Natural killer cell (primary cell): ENCODE measurements at regions of chr13 and their contacts with region 1.

Region 1: GRCh38 chr13:40982772-40983171 is 36.3 kb downstream of the ELF1 start:
- DNase-seq: peak in 1 of 2 donors; percentile 89
- ATAC-seq: peak; percentile 57 to 80 (median 78)
- H3K4me3 ChIP-seq: peak overlapping the region; percentile 48
- H3K4me3 Mint-ChIP-seq: peak overlapping the region; percentile 99
- H3K27ac ChIP-seq: peak overlapping the region; percentile 99
- H3K27ac Mint-ChIP-seq: peak overlapping the region; percentile 87 to 93
- H3K4me1 ChIP-seq: peaks cover 27% of the 10 kb centered on the region
- H3K4me1 Mint-ChIP-seq: peaks cover 80 to 83% of the 10 kb centered on the region in 2 donors
- H3K27me3 ChIP-seq: no peaks in the 10 kb centered on the region
- H3K27me3 Mint-ChIP-seq: no peaks in the 10 kb centered on the region
- CTCF ChIP-seq: no peak

Region 2: GRCh38 chr13:40922437-40923040 is 60.2 kb before region 1 on chr13:
- intact Hi-C with region 1: loop called (anchors 5 kb)
- DNase-seq: peak in 1 of 2 donors; percentile 17
- ATAC-seq: no peak
- H3K4me3 ChIP-seq: no peak overlapping the region
- H3K4me3 Mint-ChIP-seq: peak overlapping the region; percentile 97
- H3K27ac ChIP-seq: no peak overlapping the region
- H3K27ac Mint-ChIP-seq: peak overlapping the region; percentile 90
- H3K4me1 ChIP-seq: peaks cover 12% of the 10 kb centered on the region
- H3K4me1 Mint-ChIP-seq: peaks cover 19 to 20% of the 10 kb centered on the region in 2 donors
- H3K27me3 ChIP-seq: no peaks in the 10 kb centered on the region
- H3K27me3 Mint-ChIP-seq: no peaks in the 10 kb centered on the region
- CTCF ChIP-seq: no peak

Region 3: GRCh38 chr13:40943073-40943472 is 39.7 kb before region 1 on chr13:
- intact Hi-C with region 1: no loop called
- DNase-seq: no peak
- ATAC-seq: no peak
- H3K4me3 ChIP-seq: no peak overlapping the region
- H3K4me3 Mint-ChIP-seq: no peak overlapping the region
- H3K27ac ChIP-seq: no peak overlapping the region
- H3K27ac Mint-ChIP-seq: peak overlapping the region; percentile 21 to 77
- H3K4me1 ChIP-seq: no peaks in the 10 kb centered on the region
- H3K4me1 Mint-ChIP-seq: peaks cover 43 to 50% of the 10 kb centered on the region in 2 donors
- H3K27me3 ChIP-seq: no peaks in the 10 kb centered on the region
- H3K27me3 Mint-ChIP-seq: no peaks in the 10 kb centered on the region
- CTCF ChIP-seq: no peak

Region 4: DNA sequence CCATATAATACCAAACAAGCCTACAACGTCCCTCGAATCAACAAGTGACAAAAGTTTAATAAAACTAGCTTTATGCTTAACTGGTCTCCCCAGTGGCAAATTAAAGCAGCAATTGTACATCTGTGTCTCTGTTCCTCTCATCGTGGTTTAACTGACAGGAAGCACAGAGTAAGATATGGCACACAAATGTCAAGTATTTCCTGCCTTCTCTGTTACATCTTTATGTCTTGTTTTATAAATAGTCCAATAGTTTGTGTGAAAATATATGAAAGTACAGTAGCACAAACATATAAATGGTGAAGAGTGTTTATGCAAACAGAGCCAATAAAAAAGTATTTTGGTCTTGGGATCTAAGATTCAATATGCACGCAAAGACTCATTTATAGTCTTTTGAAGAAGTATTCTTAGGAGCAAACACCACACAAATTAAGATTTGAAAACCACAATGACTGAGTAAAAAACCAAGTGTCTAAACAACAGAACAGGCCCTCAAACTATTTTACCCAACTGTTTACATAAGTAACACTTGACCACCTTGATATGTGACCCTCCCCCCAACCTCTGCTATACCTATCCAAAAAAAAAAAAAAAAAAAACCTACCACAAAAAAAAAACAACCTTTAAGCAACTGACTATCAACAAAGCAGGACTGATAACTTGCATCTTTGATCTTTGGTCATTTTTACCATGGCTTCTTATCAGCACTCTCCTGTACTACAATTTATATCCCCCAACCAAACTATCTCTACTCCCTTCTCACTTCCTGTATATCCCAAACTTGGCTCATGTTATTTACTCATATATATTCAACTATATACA is 22.3 kb after region 1 on chr13:
- intact Hi-C with region 1: loop called (anchors 2 kb)
- DNase-seq: peak in 1 of 2 donors; percentile 78
- ATAC-seq: peak; percentile 75 to 88 (median 87)
- H3K4me3 ChIP-seq: peak overlapping the region; percentile 15
- H3K4me3 Mint-ChIP-seq: peak overlapping the region; percentile 73
- H3K27ac ChIP-seq: peak overlapping the region; percentile 73
- H3K27ac Mint-ChIP-seq: peak overlapping the region; percentile 88 to 93
- H3K4me1 ChIP-seq: peaks cover 23% of the 10 kb centered on the region
- H3K4me1 Mint-ChIP-seq: peaks cover 56 to 65% of the 10 kb centered on the region in 2 donors
- H3K27me3 ChIP-seq: no peaks in the 10 kb centered on the region
- H3K27me3 Mint-ChIP-seq: no peaks in the 10 kb centered on the region
- CTCF ChIP-seq: no peak

Region 5: DNA sequence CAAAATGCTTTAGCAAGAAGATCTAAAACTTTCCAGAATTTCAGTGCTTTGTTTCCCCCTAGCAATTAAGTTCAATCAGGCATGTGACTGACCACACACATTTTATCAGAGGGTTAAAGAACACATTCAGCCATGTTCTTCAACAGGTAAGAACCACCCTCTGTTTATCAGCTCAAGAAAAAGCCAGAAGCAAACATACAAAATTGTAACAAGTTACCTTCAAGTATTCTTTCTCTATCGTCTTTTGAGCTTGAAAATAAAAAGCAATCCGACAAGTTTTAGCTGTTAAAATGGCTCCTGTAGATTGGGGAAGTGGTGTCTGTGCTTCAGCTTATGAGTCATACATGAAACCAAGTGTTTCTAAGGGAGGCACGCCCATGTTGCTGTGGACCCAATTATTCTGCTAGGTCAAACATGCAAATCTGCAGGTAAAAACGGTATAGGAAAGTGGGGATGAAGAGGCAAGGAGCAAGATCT is 36.3 kb after region 1 on chr13 and contains the start of gene ELF1:
- intact Hi-C with region 1: loop called (anchors 1 kb)
- DNase-seq: peak; percentile 32 to 87
- ATAC-seq: peak; percentile 87 to 93 (median 91)
- H3K4me3 ChIP-seq: peak within 1 kb of the TSS; percentile 94
- H3K4me3 Mint-ChIP-seq: peak within 1 kb of the TSS; percentile 99
- H3K27ac ChIP-seq: peak within 1 kb of the TSS; percentile 100
- H3K27ac Mint-ChIP-seq: peak within 1 kb of the TSS; percentile 91 to 98
- H3K4me1 ChIP-seq: peaks cover 6% of the 10 kb centered on the region
- H3K4me1 Mint-ChIP-seq: peaks cover 45 to 52% of the 10 kb centered on the region in 2 donors
- H3K27me3 ChIP-seq: no peaks in the 10 kb centered on the region
- H3K27me3 Mint-ChIP-seq: no peaks in the 10 kb centered on the region
- CTCF ChIP-seq: no peak
- total RNA-seq, gene ELF1: 174 to 216 (median 193) TPM